HCT116 (cell line): ENCODE measurements at regions of chr14 and their contacts with region 1.

Region 1: GRCh38 chr14:61196792-61197191 is 84.3 kb downstream of the TMEM30B start:
- DNase-seq: no peak
- ATAC-seq: peak; percentile 60
- H3K4me3 ChIP-seq: no peak overlapping the region
- H3K27ac ChIP-seq: no peak overlapping the region
- H3K4me1 ChIP-seq: no peaks in the 10 kb centered on the region
- H3K27me3 ChIP-seq: no peaks in the 10 kb centered on the region
- CTCF ChIP-seq: peak; percentile 5 to 34 (median 27); a peak in 2 of 6 replicates
- POLR2A ChIP-seq: no peak
- RAD21 ChIP-seq: peak; percentile 62

Region 2: GRCh38 chr14:60294411-60295069 is 902.3 kb before region 1 on chr14:
- CTCF ChIA-PET with region 1: no interaction called
- POLR2A ChIA-PET with region 1: no interaction called
- RAD21 ChIA-PET with region 1: no interaction called
- intact Hi-C with region 1: no loop called
- DNase-seq: no peak
- ATAC-seq: no peak
- H3K4me3 ChIP-seq: no peak overlapping the region
- H3K27ac ChIP-seq: no peak overlapping the region
- H3K4me1 ChIP-seq: no peaks in the 10 kb centered on the region
- H3K27me3 ChIP-seq: no peaks in the 10 kb centered on the region
- CTCF ChIP-seq: no peak
- POLR2A ChIP-seq: no peak
- RAD21 ChIP-seq: no peak

Region 3: DNA sequence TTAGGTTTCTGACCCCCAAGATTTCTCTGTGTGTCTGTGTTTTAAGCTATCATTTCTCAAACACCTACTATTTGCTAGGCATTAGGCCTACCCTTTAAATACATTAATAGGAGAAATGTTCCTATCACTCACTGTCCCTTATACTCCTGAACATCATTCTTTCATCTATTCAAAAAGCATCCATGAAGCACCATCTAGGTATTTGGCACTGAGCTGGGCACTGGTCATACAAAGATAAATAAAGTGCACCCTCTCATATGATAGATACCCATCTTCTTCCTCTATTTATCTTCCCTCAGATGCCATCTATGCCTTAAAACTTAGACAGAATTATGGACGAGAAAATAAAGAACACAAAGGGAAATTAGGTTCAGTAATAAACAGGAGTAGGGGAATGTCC is 567.9 kb before region 1 on chr14:
- CTCF ChIA-PET with region 1: no interaction called
- POLR2A ChIA-PET with region 1: no interaction called
- RAD21 ChIA-PET with region 1: no interaction called
- intact Hi-C with region 1: loop called (anchors 5 kb)
- DNase-seq: no peak
- ATAC-seq: no peak
- H3K4me3 ChIP-seq: no peak overlapping the region
- H3K27ac ChIP-seq: no peak overlapping the region
- H3K4me1 ChIP-seq: peaks cover 0 to 7% of the 10 kb centered on the region in 2 experiments; a peak in 1 of 4 replicates
- H3K27me3 ChIP-seq: no peaks in the 10 kb centered on the region
- CTCF ChIP-seq: no peak
- POLR2A ChIP-seq: no peak
- RAD21 ChIP-seq: no peak

Region 4: GRCh38 chr14:61321385-61322010 is 124.7 kb after region 1 on chr14 and contains the start of gene PRKCH:
- CTCF ChIA-PET with region 1: no interaction called
- POLR2A ChIA-PET with region 1: no interaction called
- RAD21 ChIA-PET with region 1: no interaction called
- intact Hi-C with region 1: no loop called
- DNase-seq: peak; percentile 54
- ATAC-seq: peak; percentile 80
- H3K4me3 ChIP-seq: peak within 1 kb of the TSS; percentile 70 to 80
- H3K27ac ChIP-seq: peak within 1 kb of the TSS; percentile 50
- H3K4me1 ChIP-seq: peaks cover 4 to 25% of the 10 kb centered on the region in 2 experiments; a peak in 3 of 4 replicates
- H3K27me3 ChIP-seq: no peaks in the 10 kb centered on the region
- CTCF ChIP-seq: peak in 2 of 3 experiments; percentile 8 to 16; a peak in 1 of 6 replicates
- POLR2A ChIP-seq: peak; percentile 60
- RAD21 ChIP-seq: peak; percentile 50
- total RNA-seq, gene PRKCH: 16.6 TPM